MCF 10A (cell line): ENCODE measurements at regions of chr4 and their contacts with region 1.

Region 1: DNA sequence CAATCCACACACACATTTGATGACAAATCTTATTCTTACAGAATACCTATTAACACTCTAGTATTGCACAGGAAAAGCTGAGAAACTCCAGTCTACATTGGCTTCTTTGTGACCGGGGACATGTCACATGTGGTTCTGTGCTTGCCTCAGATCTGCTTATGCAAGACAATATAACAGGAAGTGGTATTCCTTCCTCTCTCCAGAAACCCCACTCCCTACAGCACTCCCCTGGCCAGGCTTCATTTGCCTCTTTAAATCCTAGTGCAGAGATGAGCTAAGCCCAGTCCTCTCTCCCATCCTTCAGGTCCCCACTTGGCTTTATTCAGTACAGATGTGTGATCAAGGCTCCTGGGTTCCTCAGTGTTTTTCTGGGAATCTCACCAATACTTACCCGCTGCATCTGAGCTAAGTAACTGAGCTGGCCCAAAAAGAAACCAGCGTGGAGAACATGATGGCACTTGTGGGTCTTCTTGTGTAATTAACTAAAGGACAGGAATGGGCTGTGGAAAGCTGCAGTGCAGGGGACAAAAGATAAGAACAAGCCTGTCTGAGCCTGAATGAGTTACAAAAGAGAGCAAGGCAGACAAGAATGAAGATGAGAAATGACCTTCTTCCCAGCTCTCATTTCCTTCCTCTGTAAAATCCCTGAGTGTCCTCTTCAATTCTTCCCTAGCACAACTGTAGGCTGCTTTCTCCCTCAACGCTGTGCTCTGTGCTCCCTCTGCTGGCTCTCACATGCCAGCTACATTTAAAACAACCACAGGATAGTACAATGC is 105.6 kb downstream of the HNRNPD start:
- DNase-seq: peak; percentile 76
- H3K4me3 Mint-ChIP-seq: no peak overlapping the region
- H3K27ac Mint-ChIP-seq: no peak overlapping the region
- H3K4me1 Mint-ChIP-seq: no peaks in the 10 kb centered on the region
- H3K27me3 Mint-ChIP-seq: no peaks in the 10 kb centered on the region
- CTCF ChIP-seq: peak; percentile 77

Region 2: GRCh38 chr4:81399306-81400086 is 868.7 kb before region 1 on chr4:
- CTCF ChIA-PET with region 1: interaction called, 15 read pairs
- POLR2A ChIA-PET with region 1: no interaction called
- intact Hi-C with region 1: no loop called
- DNase-seq: no peak
- H3K4me3 Mint-ChIP-seq: no peak overlapping the region
- H3K27ac Mint-ChIP-seq: no peak overlapping the region
- H3K4me1 Mint-ChIP-seq: no peaks in the 10 kb centered on the region
- H3K27me3 Mint-ChIP-seq: peaks cover 11% of the 10 kb centered on the region
- CTCF ChIP-seq: no peak

Region 3: GRCh38 chr4:81844717-81845116 is 423.5 kb before region 1 on chr4:
- CTCF ChIA-PET with region 1: interaction called, 14 read pairs
- POLR2A ChIA-PET with region 1: no interaction called
- intact Hi-C with region 1: loop called (anchors 1 kb)
- DNase-seq: peak; percentile 85
- H3K4me3 Mint-ChIP-seq: no peak overlapping the region
- H3K27ac Mint-ChIP-seq: no peak overlapping the region
- H3K4me1 Mint-ChIP-seq: peaks cover 5% of the 10 kb centered on the region
- H3K27me3 Mint-ChIP-seq: no peaks in the 10 kb centered on the region
- CTCF ChIP-seq: peak; percentile 78

Region 4: DNA sequence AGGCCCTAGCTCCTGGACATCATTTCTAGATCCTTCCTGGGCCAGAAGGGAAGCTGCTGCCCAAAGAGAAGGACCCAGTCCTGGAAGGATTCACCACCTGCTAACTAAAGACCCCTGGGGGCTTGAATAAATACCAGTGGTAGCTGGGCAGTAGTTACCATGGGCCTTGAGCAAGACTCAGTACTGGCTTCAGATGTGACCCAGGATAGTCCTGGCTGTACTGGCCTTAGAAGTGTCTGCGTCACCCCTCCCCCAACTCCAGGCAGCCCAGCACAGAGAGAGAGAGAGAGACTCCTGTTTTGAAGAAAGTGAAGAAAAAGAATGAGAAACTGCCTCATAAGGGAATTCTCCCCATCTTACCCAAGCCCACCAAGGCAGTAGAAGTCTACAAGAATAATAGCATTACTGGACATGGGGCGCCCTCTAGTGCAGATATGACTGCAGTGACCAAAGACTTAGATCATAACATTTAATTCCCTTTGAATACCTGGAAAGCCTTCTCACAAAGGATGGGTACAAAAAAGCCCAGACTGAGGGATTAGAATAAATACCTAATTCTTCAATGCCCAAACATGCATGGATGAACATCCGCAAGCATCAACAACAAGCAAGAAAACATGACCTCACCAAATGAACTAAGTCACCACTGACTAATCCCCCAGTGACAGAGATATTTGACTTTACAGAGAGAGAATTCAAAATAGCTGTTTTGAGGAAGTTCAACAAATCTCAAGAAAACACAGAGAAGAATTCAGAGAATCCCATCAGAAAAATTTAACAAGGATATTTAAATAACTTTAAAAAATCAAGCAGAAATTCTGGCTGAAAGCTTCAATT is 66.2 kb before region 1 on chr4:
- CTCF ChIA-PET with region 1: interaction called, 7 read pairs
- POLR2A ChIA-PET with region 1: no interaction called
- intact Hi-C with region 1: loop called (anchors 1 kb)
- DNase-seq: peak; percentile 69
- H3K4me3 Mint-ChIP-seq: no peak overlapping the region
- H3K27ac Mint-ChIP-seq: no peak overlapping the region
- H3K4me1 Mint-ChIP-seq: peaks cover 5% of the 10 kb centered on the region
- H3K27me3 Mint-ChIP-seq: no peaks in the 10 kb centered on the region
- CTCF ChIP-seq: peak; percentile 74

Region 5: DNA sequence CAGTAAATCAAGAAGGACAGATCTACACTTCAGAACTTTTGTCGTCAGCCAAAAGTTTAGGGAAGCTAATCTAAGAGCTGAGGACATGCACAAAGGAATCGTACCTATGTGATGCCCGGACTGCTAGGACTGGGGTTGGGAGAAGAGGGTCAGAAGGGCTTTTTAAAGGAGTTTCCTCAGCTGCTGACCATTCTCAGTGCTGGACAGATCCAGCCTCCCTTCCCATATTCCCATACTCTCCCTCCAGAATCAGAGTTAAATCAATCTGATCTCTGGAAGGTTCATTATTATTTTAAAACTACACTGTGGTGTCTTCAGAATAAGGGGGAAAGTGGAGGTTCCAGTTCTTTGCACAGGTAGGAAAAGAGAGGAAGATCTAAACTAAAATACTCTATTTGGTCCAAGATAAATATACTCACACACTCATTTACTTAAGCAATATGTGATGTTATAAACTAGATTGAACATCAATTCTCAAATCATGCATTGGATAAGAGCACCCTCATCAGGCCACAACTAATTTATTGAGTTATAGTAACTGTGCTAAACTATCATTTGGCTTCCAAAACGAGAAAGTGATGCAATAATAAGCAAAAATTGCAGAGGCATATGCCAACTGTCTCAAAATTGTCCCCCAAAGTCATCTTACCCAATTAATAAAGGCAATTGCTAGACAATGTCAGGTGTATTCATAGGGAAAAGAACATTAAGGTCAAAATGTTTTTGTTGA is 19.2 kb before region 1 on chr4:
- CTCF ChIA-PET with region 1: interaction called, 33 read pairs
- POLR2A ChIA-PET with region 1: no interaction called
- intact Hi-C with region 1: loop called (anchors 1 kb)
- DNase-seq: peak; percentile 13
- H3K4me3 Mint-ChIP-seq: no peak overlapping the region
- H3K27ac Mint-ChIP-seq: no peak overlapping the region
- H3K4me1 Mint-ChIP-seq: peaks cover 14% of the 10 kb centered on the region
- H3K27me3 Mint-ChIP-seq: no peaks in the 10 kb centered on the region
- CTCF ChIP-seq: no peak